GM10248 (cell line): ENCODE measurements at regions of chr3 and their contacts with region 1.

Region 1: GRCh38 chr3:18559331-18559842 is 134.2 kb upstream of the SATB1 start:
- DNase-seq: peak; percentile 21
- CTCF ChIP-seq: peak; percentile 74

Region 2: GRCh38 chr3:18546632-18547031 is 12.8 kb before region 1 on chr3:
- CTCF ChIA-PET with region 1: interaction called, 13 read pairs
- POLR2A ChIA-PET with region 1: no interaction called
- DNase-seq: no peak
- CTCF ChIP-seq: no peak

Region 3: DNA sequence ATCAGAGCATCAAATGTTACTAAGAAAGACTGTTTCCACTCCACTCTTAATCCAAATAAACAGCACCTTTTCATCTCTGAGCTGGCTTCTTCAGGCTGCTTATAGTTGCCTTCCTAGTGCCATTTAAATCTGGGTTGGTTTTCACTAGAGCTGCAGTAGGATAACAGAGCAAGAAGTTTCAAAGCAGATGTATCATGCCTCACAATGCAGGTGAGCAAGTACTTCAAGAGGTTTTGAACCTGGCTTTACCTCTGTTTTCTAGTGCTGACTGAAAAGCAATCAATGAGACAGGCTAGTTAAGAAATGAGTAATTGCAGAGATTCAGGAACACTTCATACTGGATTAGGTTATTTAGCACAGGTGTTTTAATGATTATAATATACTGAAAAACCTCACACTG is 13.4 kb after region 1 on chr3:
- CTCF ChIA-PET with region 1: interaction called, 41 read pairs
- POLR2A ChIA-PET with region 1: no interaction called
- DNase-seq: no peak
- CTCF ChIP-seq: no peak

Region 4: DNA sequence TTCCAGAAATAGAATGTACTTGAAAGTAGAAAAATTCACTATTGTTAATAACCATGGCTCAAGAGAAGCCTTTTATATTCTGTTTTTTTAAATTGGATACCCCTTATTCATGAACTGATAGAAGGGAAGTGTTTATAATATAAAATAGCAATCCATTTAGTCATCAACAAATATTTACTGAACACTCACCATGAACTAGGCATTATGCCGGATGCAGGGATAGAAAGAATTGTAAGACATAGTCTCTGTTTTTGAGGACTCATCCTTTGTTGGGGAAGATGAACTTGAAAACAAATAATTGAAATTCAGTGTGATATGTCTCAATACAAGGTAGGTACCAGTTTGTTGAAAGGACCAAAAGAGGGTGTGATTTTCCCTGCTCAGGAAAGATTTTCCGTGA is 26.7 kb after region 1 on chr3:
- CTCF ChIA-PET with region 1: interaction called, 11 read pairs
- POLR2A ChIA-PET with region 1: no interaction called
- DNase-seq: no peak
- CTCF ChIP-seq: no peak

Region 5: GRCh38 chr3:18609187-18609586 is 49.8 kb after region 1 on chr3:
- CTCF ChIA-PET with region 1: no interaction called
- POLR2A ChIA-PET with region 1: no interaction called
- DNase-seq: no peak
- CTCF ChIP-seq: no peak

Region 6: GRCh38 chr3:18758047-18758704 is 198.8 kb after region 1 on chr3:
- CTCF ChIA-PET with region 1: interaction called, 92 read pairs
- POLR2A ChIA-PET with region 1: no interaction called
- DNase-seq: peak; percentile 20
- CTCF ChIP-seq: peak; percentile 54